Right cardiac atrium (tissue), 5 donors: ENCODE measurements at regions of chr1 and their contacts with region 1.

Region 1: DNA sequence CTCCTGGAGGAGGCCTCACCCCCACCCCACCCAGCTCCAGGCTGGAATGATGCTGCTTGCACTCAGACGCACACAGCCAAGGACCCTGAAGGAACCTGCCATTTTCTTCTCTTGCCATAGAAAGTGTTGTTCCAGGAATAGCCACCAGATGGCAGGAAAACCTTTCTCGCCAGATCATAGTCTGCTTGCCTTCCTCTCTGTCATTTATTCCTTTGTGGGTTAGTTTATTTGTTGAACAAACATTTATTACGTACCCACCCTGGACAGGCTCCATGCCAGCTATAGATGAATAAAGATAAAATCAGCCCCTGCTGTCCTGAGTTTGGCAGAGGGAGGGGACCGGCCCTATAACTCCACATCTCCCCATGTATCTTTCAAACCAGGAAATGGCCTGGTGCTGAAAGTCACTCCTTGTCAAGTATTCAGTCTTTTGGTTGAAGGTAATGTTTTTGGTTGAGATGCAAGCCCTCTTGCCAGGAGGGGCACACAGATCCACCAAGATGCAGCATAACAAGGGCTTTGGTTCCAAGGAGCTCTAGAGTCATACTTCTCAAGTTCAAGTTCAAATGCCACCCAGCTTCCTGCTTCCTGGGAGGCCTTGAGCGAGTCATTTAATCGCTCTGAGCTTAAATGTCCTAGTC is 7.0 kb upstream of the KCNC4 start:
- DNase-seq: peak in 1 of 3 donors; percentile 46
- ATAC-seq: peak; percentile 28 to 61
- H3K4me3 ChIP-seq: no peak overlapping the region
- H3K27ac ChIP-seq: no peak overlapping the region
- H3K4me1 ChIP-seq: no peaks in the 10 kb centered on the region
- H3K27me3 ChIP-seq: no peaks in the 10 kb centered on the region

Region 2: DNA sequence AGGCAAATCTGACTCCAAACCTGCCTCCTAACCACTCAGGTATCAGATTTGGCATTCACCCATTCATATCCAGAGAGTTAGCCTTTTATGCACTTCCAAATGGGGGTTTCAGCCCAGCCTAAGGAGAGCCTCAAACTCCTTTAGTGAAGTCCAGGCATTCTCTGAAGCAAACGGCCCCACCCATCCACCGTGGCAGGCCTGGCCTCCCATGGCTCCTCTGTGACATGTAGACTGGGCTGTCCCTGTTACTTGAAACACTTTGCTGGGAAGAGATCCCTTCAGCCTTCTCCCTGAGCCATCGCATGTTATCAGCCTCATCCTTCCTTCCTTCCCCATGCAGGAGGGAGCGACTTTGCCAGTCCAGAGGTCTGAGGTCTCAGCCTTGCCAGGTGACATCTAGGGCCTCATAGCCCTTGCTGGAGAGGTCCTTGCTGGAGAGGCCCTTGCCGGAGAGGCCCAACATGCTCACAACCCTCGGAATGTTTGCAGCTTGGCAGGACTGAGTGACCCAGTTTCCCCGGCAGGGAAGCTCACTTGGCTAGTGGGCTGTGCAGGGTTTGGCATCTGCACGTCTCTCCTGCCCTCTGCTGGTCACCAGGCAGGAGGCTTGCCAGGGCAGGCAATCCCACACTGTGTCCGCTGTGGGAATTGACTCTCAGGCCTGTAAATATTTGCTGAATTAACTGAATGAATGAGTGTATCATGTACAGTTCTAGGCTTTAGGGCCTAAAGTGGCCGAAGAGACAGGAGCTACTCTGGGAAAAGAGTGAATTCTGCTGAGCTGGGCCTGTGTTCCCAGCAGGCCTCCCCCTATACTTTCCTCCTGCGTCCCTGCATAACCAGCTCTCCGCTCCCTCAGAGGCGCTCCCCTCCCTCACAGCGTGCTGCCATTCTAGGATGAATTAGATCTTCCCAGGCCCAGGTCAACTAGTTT is 109.3 kb after region 1 on chr1:
- intact Hi-C with region 1: loop called (anchors 2 to 5 kb)
- DNase-seq: peak; percentile 83 to 92 (median 91)
- ATAC-seq: peak; percentile 96 to 97
- H3K4me3 ChIP-seq: no peak overlapping the region
- H3K27ac ChIP-seq: no peak overlapping the region
- H3K4me1 ChIP-seq: peaks cover 3% of the 10 kb centered on the region
- H3K27me3 ChIP-seq: no peaks in the 10 kb centered on the region

Region 3: GRCh38 chr1:110565565-110565964 is 362.4 kb after region 1 on chr1:
- intact Hi-C with region 1: no loop called
- DNase-seq: no peak
- ATAC-seq: no peak
- H3K4me3 ChIP-seq: no peak overlapping the region
- H3K27ac ChIP-seq: no peak overlapping the region
- H3K4me1 ChIP-seq: no peaks in the 10 kb centered on the region
- H3K27me3 ChIP-seq: no peaks in the 10 kb centered on the region